Transverse colon (tissue), 4 donors: ENCODE measurements at regions of chr16 and their contacts with region 1.

Region 1: GRCh38 chr16:23174622-23175021 is 7.9 kb upstream of the SCNN1G start:
- DNase-seq: no peak
- H3K4me3 ChIP-seq: no peak overlapping the region
- H3K27ac ChIP-seq: no peak overlapping the region
- H3K4me1 ChIP-seq: no peaks in the 10 kb centered on the region
- H3K27me3 ChIP-seq: peaks cover 38% of the 10 kb centered on the region
- CTCF ChIP-seq: no peak
- EP300 ChIP-seq: no peak
- POLR2A ChIP-seq: no peak

Region 2: GRCh38 chr16:23195366-23195978 is 20.9 kb after region 1 on chr16:
- in situ Hi-C with region 1: no loop called
- intact Hi-C with region 1: loop called (anchors 1 kb)
- DNase-seq: no peak
- H3K4me3 ChIP-seq: no peak overlapping the region
- H3K27ac ChIP-seq: peak overlapping the region in 3 of 4 donors; percentile 18 to 49 (median 35)
- H3K4me1 ChIP-seq: peaks cover 0 to 24% (median 10%) of the 10 kb centered on the region in 4 donors
- H3K27me3 ChIP-seq: no peaks in the 10 kb centered on the region
- CTCF ChIP-seq: no peak
- EP300 ChIP-seq: no peak
- POLR2A ChIP-seq: no peak